ENCODE measurements at regions of chr3 and their contacts with region 1.

Region 1: GRCh38 chr3:14203521-14204079 is 25.0 kb downstream of the LSM3 start:
- DNase-seq: peak; percentile 61
- ATAC-seq: no peak
- H3K4me3 ChIP-seq: no peak overlapping the region
- H3K4me3 Mint-ChIP-seq: no peak overlapping the region
- H3K27ac ChIP-seq: no peak overlapping the region
- H3K27ac Mint-ChIP-seq: no peak overlapping the region
- H3K4me1 ChIP-seq: no peaks in the 10 kb centered on the region
- H3K4me1 Mint-ChIP-seq: peaks cover 2% of the 10 kb centered on the region
- H3K27me3 ChIP-seq: no peaks in the 10 kb centered on the region
- H3K27me3 Mint-ChIP-seq: no peaks in the 10 kb centered on the region
- CTCF ChIP-seq: peak; percentile 87

Region 2: DNA sequence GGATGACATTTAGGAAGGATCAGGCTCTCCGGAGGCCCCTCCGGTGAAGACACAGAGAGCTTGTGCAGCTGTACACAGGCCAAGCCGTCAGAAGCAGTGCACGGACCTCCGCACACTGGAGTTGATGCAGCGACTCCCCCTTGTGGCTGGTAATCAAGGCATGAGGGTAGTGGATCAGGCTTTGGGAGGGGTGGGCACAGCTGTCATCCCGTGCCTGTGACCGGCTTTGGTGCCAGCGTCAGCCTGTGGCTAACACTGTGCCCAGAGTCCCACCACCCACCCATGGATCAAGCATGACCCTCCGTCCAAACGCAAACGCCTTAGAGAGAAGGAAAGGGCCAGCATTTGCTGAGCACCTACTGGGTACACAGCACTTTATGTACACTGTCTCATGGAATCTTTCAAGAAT is 344.7 kb after region 1 on chr3:
- CTCF ChIA-PET with region 1: interaction called, 13 read pairs
- POLR2A ChIA-PET with region 1: no interaction called
- intact Hi-C with region 1: loop called (anchors 2 kb)
- DNase-seq: peak; percentile 41
- ATAC-seq: no peak
- H3K4me3 ChIP-seq: no peak overlapping the region
- H3K4me3 Mint-ChIP-seq: no peak overlapping the region
- H3K27ac ChIP-seq: no peak overlapping the region
- H3K27ac Mint-ChIP-seq: no peak overlapping the region
- H3K4me1 ChIP-seq: no peaks in the 10 kb centered on the region
- H3K4me1 Mint-ChIP-seq: peaks cover 2% of the 10 kb centered on the region
- H3K27me3 ChIP-seq: peaks cover 0 to 3% (median under 1%) of the 10 kb centered on the region in 4 experiments
- H3K27me3 Mint-ChIP-seq: peaks cover 40% of the 10 kb centered on the region
- CTCF ChIP-seq: peak; percentile 36